Heart right ventricle (tissue), 16 donors: ENCODE measurements at regions of chr11 and their contacts with region 1.

Region 1: DNA sequence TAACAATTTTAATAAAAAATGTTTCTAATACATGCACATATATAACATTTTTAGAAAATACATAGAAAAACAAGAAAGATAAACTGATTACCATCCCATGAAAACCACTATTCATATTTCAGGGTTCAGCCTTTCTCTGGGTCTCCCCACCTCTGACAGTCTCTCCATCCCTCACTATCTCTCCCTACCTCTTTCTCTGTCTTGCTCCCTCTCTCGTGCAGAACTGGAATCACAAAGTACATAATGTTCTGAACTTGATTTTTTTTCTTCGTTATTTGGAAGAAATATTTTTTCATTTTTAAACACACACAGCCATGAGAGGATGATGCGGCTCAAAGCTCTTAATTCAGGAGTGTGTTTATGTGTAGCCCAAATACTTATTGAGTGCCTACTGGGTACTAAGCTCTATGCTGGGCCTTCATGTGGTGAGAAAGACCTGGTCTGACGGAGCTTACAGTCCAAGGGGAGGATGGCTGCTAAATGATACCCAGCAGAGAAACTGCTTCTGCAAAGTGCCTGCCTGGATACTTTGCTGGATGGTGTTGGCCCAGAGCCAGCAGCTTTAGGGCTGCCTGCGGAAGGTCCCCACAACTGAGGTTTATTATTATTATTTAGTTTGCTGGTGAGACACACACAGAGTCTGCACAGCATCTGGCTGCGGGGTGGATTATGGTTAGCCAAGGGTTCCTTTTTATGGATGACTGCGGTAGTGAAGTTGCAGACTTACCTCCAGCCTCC is 42.6 kb downstream of the SC5D start:
- DNase-seq: no peak
- ATAC-seq: no peak
- H3K4me3 ChIP-seq: no peak overlapping the region
- H3K27ac ChIP-seq: no peak overlapping the region
- H3K4me1 ChIP-seq: peaks cover 0 to 32% (median 7%) of the 10 kb centered on the region in 9 donors
- H3K27me3 ChIP-seq: peaks cover 0 to 19% (median 5%) of the 10 kb centered on the region in 7 donors
- CTCF ChIP-seq: peak in 5 of 9 donors; percentile 8 to 22 (median 13)

Region 2: GRCh38 chr11:119381181-119381988 is 1953.8 kb before region 1 on chr11 and contains the start of gene USP2:
- intact Hi-C with region 1: no loop called
- DNase-seq: peak; percentile 95 to 97
- ATAC-seq: peak; percentile 87 to 98 (median 94)
- H3K4me3 ChIP-seq: peak within 1 kb of the TSS; percentile 5 to 66 (median 52)
- H3K27ac ChIP-seq: peak within 1 kb of the TSS in 9 of 10 donors; percentile 62 to 83 (median 73)
- H3K4me1 ChIP-seq: peaks cover 9 to 40% (median 28%) of the 10 kb centered on the region in 9 donors
- H3K27me3 ChIP-seq: peaks cover 0 to 4% (median 0%) of the 10 kb centered on the region in 7 donors
- CTCF ChIP-seq: peak; percentile 78 to 99 (median 94)
- total RNA-seq, gene USP2: 87.0 to 183 (median 136) TPM

Region 3: GRCh38 chr11:120579611-120580031 is 755.5 kb before region 1 on chr11:
- intact Hi-C with region 1: no loop called
- DNase-seq: no peak
- ATAC-seq: no peak
- H3K4me3 ChIP-seq: no peak overlapping the region
- H3K27ac ChIP-seq: no peak overlapping the region
- H3K4me1 ChIP-seq: no peaks in the 10 kb centered on the region
- H3K27me3 ChIP-seq: peaks cover 0 to 60% (median 28%) of the 10 kb centered on the region in 7 donors
- CTCF ChIP-seq: no peak

Region 4: DNA sequence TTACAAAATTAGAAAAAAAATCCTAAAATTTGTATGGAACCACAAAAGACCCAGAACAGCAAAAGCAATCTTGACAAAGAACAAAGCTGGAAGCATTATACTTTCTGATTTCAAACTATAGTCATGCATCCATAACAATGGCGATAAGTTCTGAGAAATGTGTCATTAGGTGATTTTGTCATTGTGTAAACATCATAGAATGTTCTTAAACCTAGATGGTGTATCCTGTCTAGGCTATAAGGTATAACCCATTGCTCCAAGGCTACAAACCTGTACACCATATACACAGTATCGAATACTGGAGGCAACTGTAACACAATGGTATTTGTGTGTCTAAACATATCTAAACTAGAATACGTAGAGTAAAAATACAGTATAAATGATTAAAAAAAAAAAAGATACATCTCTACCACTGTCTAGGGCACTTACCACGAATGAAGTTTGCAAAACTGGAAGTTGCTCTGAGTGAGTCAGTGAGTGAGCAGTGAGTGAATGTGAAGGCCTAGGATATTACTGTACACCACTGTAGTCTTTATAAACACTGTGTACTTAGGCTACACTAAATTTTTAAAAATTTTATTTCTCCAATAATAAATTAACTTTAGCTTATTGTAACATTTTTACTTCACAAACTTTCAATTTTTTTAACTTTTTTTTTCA is 60.7 kb before region 1 on chr11:
- intact Hi-C with region 1: no loop called
- DNase-seq: no peak
- ATAC-seq: no peak
- H3K4me3 ChIP-seq: no peak overlapping the region
- H3K27ac ChIP-seq: no peak overlapping the region
- H3K4me1 ChIP-seq: no peaks in the 10 kb centered on the region
- H3K27me3 ChIP-seq: peaks cover 0 to 21% (median 14%) of the 10 kb centered on the region in 7 donors
- CTCF ChIP-seq: no peak

Region 5: GRCh38 chr11:121383716-121384115 is 48.6 kb after region 1 on chr11:
- intact Hi-C with region 1: loop called in 1 of 10 experiments (anchors 5 kb)
- DNase-seq: peak in 1 of 2 donors; percentile 55
- ATAC-seq: peak; percentile 67 to 98 (median 93)
- H3K4me3 ChIP-seq: no peak overlapping the region
- H3K27ac ChIP-seq: peak overlapping the region in 9 of 10 donors; percentile 26 to 85 (median 70)
- H3K4me1 ChIP-seq: peaks cover 0 to 37% (median 4%) of the 10 kb centered on the region in 9 donors
- H3K27me3 ChIP-seq: no peaks in the 10 kb centered on the region
- CTCF ChIP-seq: no peak

Region 6: GRCh38 chr11:121426476-121427399 is 91.6 kb after region 1 on chr11:
- intact Hi-C with region 1: loop called in 2 of 10 experiments (anchors 10 kb)
- DNase-seq: peak; percentile 30 to 56
- ATAC-seq: peak; percentile 79 to 92 (median 84)
- H3K4me3 ChIP-seq: peak overlapping the region in 9 of 10 donors; percentile 16 to 41 (median 33)
- H3K27ac ChIP-seq: peak overlapping the region in 3 of 10 donors; percentile 25 to 38 (median 28)
- H3K4me1 ChIP-seq: peaks cover 0 to 29% (median 0%) of the 10 kb centered on the region in 9 donors
- H3K27me3 ChIP-seq: peaks cover 0 to 5% (median 0%) of the 10 kb centered on the region in 7 donors
- CTCF ChIP-seq: peak in 5 of 9 donors; percentile 24 to 48 (median 41)

Region 7: DNA sequence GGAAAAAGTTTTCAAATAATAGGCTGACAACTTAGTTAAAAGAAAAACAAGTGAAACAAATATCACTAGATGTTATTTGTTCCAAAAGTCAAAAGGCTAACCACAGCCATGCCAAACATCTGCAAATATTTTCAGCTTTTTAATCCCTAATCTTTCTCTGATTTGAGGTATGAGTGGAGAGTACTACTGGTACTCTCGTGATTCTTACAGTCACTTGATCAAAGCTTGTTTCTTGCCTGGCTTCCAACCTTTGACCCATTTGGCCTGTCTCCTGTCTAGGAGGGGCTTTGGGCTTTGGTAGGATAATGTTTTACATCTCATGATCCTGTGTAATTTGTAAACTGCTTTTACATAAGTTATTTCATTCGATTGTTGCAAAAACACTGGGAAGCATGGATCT is 419.5 kb after region 1 on chr11:
- intact Hi-C with region 1: no loop called
- DNase-seq: no peak
- ATAC-seq: peak in 1 of 8 donors; percentile 65
- H3K4me3 ChIP-seq: no peak overlapping the region
- H3K27ac ChIP-seq: peak overlapping the region in 1 of 10 donors; percentile 1
- H3K4me1 ChIP-seq: peaks cover 0 to 12% (median 9%) of the 10 kb centered on the region in 9 donors
- H3K27me3 ChIP-seq: no peaks in the 10 kb centered on the region
- CTCF ChIP-seq: no peak